Head of caudate nucleus (tissue), 42 donors: ENCODE measurements at regions of chr2 and their contacts with region 1.

Region 1: GRCh38 chr2:128027801-128028667 is at the start of gene SAP130:
- DNase-seq: peak; percentile 95 to 100 (median 99)

Region 2: DNA sequence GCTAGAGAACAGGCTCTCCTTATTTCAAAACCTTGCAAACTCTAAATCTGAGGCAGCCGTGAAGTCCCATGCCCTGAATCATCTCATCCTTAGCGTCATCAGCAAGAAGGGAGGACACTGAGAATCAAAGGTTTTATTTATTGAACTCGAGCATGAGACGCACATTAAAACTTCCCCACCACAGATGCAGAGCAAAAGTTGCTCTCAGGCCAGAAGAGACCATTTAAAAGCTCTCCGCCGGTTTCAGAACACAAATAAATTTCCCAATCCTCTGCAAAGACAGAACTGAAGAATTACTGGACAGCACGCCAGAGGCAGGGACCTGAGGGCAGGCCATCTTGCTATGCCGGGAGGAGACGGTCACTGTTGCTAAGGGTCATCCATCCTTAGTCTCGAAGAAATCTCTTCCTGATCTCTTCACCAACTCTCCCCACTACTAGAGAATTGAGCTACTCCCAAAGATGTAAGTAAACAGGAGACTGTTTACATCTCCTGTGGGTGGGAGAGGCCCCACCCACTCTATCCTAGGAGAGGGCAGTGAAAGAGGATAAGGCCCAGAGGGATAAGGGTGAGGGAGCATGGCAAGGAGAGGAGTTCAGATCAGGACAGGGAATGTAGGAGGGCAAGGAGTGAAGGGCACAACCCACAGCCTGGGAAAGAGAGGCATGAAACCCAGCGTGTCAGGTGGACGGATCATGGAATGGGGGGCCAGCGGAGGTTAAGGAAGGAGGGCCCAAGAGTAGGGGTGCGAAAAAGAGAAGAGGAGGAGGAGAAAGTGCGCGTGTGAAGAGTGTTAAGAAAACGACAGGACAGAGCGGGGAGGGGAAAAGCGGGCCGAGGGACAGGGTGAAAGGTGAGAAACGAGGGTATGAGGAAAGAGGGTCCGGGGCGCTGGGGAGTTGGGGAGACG is 143.3 kb before region 1 on chr2:
- intact Hi-C with region 1: loop called (anchors 10 kb)
- DNase-seq: peak in 1 of 42 donors; percentile 3

Region 3: DNA sequence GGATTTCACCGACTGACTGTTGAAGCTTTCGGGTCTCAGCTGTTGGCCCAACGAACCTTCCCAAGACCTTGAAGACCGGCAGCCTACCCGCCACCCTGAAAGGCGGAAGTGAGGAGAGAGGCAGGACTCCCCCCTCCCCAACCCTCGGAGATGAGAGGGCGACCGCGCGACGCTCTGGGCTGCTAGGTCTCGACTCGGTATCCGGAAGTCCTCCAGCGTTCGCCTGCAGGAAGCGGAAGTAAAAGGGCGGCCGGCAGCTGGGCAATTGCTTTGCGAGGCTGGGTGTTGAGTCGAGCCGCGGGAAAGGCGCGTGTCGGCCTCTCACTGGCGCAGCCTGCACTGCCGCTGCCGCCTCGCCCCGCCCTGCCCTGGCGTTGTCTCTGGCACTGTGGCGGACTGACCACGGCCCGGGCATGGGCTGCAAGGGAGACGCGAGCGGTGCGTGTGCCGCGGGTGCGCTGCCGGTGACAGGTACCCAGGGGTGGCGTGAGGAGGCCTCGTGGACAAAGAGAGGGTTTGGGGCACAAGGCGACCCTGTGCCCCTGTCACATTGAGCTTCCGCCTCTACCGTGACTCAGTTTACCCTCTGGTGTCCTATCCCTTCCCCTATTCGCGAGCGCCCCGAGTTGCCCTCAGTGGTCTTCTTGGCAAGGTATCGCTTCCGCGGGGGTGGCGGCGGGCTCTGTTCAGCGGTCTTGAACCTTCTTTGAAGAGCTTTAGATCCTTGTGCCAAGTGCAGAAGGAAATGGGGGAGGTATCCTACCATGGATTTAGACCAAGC is 63.1 kb after region 1 on chr2 and contains the start of gene UGGT1:
- intact Hi-C with region 1: loop called (anchors 2 kb)
- DNase-seq: peak; percentile 89 to 98 (median 95)